ENCODE measurements at regions of chr21 and their contacts with region 1.

Region 1: DNA sequence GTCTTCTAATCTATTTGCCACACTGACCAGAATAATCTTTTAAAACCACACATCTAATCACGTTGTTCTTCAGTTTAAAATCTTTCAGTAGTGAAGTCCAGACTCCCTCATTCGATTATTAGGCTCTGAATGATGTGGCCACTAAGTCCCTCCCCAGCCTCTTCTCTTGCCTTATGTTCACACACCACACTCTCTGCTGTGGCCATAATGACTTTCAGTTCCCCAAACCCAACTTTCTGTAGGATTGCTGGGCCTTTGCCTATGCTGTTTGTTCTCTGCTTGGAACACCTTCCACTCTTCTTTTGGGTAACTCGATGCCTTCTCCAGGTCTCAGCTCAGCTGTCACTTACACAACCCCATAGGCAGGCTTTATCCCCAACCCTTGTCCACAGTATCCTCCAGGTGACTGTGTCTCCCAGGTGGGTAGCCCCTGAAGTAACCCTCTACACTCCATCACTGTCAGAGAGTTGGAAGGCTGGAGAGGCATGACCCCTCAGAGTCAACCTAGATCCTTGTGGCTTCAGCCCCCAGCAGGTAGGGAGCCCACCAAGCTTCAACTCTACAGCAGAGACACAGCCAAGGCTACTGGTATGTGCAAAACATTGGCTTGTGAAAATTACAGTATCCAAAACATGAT is 8.4 kb upstream of the SLC37A1 start:
- DNase-seq: no peak
- H3K4me3 ChIP-seq: no peak overlapping the region
- H3K4me3 Mint-ChIP-seq: no peak overlapping the region
- H3K27ac Mint-ChIP-seq: no peak overlapping the region
- H3K4me1 ChIP-seq: peaks cover 20% of the 10 kb centered on the region
- H3K4me1 Mint-ChIP-seq: peaks cover 27% of the 10 kb centered on the region
- H3K27me3 ChIP-seq: no peaks in the 10 kb centered on the region
- H3K27me3 Mint-ChIP-seq: no peaks in the 10 kb centered on the region
- CTCF ChIP-seq: no peak

Region 2: GRCh38 chr21:42456457-42456856 is 48.8 kb before region 1 on chr21:
- CTCF ChIA-PET with region 1: no interaction called
- POLR2A ChIA-PET with region 1: no interaction called
- intact Hi-C with region 1: no loop called
- DNase-seq: no peak
- H3K4me3 ChIP-seq: no peak overlapping the region
- H3K4me3 Mint-ChIP-seq: no peak overlapping the region
- H3K27ac Mint-ChIP-seq: no peak overlapping the region
- H3K4me1 ChIP-seq: peaks cover 17% of the 10 kb centered on the region
- H3K4me1 Mint-ChIP-seq: peaks cover 24% of the 10 kb centered on the region
- H3K27me3 ChIP-seq: no peaks in the 10 kb centered on the region
- H3K27me3 Mint-ChIP-seq: no peaks in the 10 kb centered on the region
- CTCF ChIP-seq: no peak

Region 3: DNA sequence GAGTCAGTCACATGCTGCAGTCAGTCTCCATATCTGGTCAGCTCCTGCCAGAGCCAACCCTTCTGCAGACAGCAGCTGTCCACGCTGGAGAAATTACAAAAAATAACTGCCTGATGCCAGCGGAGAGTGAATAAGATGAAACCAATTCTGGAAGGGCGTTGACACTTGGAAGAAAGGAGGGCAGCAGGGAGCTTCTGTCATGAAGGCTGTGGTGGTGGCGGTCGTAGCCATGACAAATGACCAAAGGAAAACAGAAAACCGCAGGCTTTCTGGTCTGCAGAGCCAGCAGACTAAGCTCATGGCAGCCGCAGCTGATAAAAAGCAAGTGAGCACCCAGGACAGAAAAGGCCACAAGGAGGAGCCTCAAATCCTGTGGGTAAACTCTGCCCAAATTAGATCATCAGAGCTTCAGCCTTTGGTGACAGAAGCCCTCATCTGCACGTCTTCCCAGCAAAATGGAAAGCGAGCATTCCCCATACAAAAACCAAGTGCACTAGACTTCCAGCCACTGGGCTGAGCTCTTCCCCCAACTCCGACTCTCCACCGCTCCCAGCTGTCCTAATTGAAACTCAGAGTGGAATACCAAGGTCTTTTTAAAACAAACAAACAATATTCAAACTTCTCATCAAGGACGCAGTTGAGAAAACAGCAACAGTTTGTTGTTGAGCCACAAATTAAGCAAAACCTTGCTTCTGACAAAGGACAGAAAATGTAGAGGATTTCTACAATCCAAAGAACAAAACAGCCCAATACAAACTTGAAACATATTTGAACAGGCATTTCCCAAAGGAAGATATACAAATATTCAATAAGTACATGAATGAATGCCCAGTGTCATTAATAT is 37.8 kb before region 1 on chr21:
- CTCF ChIA-PET with region 1: interaction called, 3 read pairs
- POLR2A ChIA-PET with region 1: no interaction called
- intact Hi-C with region 1: loop called (anchors 5 kb)
- DNase-seq: peak in 1 of 2 experiments; percentile 28
- H3K4me3 ChIP-seq: no peak overlapping the region
- H3K4me3 Mint-ChIP-seq: no peak overlapping the region
- H3K27ac Mint-ChIP-seq: no peak overlapping the region
- H3K4me1 ChIP-seq: peaks cover 26% of the 10 kb centered on the region
- H3K4me1 Mint-ChIP-seq: peaks cover 18% of the 10 kb centered on the region
- H3K27me3 ChIP-seq: no peaks in the 10 kb centered on the region
- H3K27me3 Mint-ChIP-seq: no peaks in the 10 kb centered on the region
- CTCF ChIP-seq: peak; percentile 21 to 58

Region 4: DNA sequence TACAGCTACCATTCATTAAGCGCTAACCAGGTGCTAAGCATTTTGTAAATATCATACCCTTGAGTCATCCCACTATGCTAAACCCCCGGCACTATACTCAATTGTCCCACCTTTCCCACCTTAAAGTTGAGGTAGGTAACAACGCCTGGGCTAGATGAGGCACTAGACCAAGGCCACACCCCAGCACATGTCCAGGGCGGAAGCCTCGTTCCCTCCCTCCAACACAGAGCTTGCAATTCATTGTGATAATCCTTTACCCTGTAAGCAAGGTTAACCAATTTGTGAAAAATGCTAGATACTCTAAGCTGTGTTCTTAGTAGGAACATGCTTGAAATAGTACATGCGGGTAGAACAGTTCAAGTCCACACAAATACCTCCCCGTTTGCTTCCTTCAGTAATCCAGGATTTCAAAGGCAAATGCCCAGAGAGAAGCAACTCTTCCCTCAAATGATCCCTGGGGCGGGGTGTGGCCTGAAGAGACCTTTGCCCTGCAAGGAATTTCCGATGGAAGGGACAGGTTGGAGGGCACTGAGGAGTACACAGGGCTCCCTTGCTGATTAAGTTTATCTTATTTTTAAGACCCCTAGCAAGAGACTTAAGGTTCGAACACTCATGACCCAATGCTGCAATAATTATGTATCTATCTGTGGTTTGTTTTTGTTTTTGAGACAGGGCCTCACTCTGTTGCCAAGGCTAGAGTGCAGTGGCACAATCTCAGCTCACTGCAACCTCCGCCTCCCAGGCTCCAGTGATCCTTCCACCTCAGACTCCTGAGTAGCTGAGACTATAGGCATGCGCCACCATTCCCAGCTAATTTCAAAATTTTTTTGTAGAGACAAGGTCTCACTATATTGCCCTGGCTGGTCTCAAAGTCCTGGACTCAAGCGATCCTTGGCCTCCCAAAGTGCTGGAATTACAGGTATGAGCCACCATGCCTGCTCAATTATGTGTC is 11.8 kb before region 1 on chr21:
- CTCF ChIA-PET with region 1: no interaction called
- POLR2A ChIA-PET with region 1: interaction called, 3 read pairs
- intact Hi-C with region 1: loop called (anchors 2 kb)
- DNase-seq: peak; percentile 64 to 71
- H3K4me3 ChIP-seq: no peak overlapping the region
- H3K4me3 Mint-ChIP-seq: no peak overlapping the region
- H3K27ac Mint-ChIP-seq: peak overlapping the region; percentile 85
- H3K4me1 ChIP-seq: peaks cover 23% of the 10 kb centered on the region
- H3K4me1 Mint-ChIP-seq: peaks cover 21% of the 10 kb centered on the region
- H3K27me3 ChIP-seq: no peaks in the 10 kb centered on the region
- H3K27me3 Mint-ChIP-seq: no peaks in the 10 kb centered on the region
- CTCF ChIP-seq: no peak

Measured in Caco-2 (cell line).